ENCODE measurements at regions of chr1 and their contacts with region 1.

Region 1: GRCh38 chr1:216388558-216388957 is 34.7 kb downstream of the USH2A start:
- DNase-seq: no peak
- H3K4me3 ChIP-seq: no peak overlapping the region
- H3K27ac ChIP-seq: no peak overlapping the region
- H3K4me1 ChIP-seq: no peaks in the 10 kb centered on the region
- H3K27me3 ChIP-seq: no peaks in the 10 kb centered on the region
- CTCF ChIP-seq: no peak

Region 2: GRCh38 chr1:216566641-216567205 is 178.2 kb after region 1 on chr1:
- CTCF ChIA-PET with region 1: no interaction called
- POLR2A ChIA-PET with region 1: no interaction called
- intact Hi-C with region 1: loop called (anchors 10 kb)
- DNase-seq: no peak
- H3K4me3 ChIP-seq: no peak overlapping the region
- H3K27ac ChIP-seq: no peak overlapping the region
- H3K4me1 ChIP-seq: no peaks in the 10 kb centered on the region
- H3K27me3 ChIP-seq: no peaks in the 10 kb centered on the region
- CTCF ChIP-seq: peak; percentile 43; the same call in 1 of the 2 replicates

Measured in PC-9 (cell line).